Activated CD4-positive, alpha-beta T cell treated with anti-CD3 and anti-CD28 coated beads for 36 hours (primary cell): ENCODE measurements at regions of chr16 and their contacts with region 1.

Region 1: DNA sequence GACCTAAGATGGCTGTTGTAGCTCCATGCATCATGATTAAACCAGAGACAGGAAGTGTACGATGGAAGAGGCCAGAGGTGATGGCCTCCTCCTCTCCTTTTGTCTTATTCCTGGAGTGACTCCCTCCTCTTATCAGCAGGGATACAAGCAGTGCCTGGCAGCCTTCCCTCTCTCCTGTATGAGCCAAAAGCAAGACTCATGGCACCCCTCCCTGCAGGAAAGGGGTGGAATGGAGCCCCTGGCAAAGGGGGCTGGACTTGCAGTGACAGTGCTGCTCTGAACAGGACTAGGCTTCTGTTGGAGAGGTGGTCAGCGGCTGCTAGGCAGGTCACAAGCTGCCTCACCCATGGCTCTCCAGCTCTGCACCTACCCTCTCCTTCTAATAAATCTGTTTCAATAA is 8.4 kb downstream of the TXNL4B start:
- DNase-seq: no peak
- ATAC-seq: no peak
- H3K4me3 Mint-ChIP-seq: no peak overlapping the region
- H3K27ac Mint-ChIP-seq: no peak overlapping the region
- H3K4me1 Mint-ChIP-seq: no peaks in the 10 kb centered on the region
- H3K27me3 Mint-ChIP-seq: no peaks in the 10 kb centered on the region

Region 2: GRCh38 chr16:71867939-71868338 is 217.1 kb before region 1 on chr16:
- CTCF ChIA-PET with region 1: no interaction called
- POLR2A ChIA-PET with region 1: no interaction called
- intact Hi-C with region 1: no loop called
- DNase-seq: no peak
- ATAC-seq: no peak
- H3K4me3 Mint-ChIP-seq: no peak overlapping the region
- H3K27ac Mint-ChIP-seq: no peak overlapping the region
- H3K4me1 Mint-ChIP-seq: peaks cover 37% of the 10 kb centered on the region
- H3K27me3 Mint-ChIP-seq: no peaks in the 10 kb centered on the region

Region 3: DNA sequence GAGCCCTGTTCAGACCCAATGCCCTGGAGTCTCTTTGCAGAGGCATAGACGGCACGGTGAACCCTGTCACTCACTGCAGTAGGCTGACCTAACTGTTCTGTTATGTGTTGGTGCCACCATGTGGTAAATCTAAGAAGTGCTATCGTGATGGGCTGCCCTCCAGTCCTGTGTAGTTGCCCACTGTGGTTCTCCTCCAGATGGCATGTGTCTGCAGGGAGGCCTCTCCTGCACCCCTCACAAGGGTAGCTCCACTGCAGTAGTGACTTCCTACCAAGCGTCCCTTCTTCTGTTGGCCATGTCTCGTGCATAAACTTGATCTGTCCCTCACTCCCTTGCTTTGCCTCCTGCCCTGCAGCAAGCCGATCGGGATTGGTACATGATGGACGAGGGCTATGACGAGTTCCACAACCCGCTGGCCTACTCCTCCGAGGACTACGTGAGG is 14.4 kb after region 1 on chr16:
- CTCF ChIA-PET with region 1: interaction called, 4 read pairs
- POLR2A ChIA-PET with region 1: no interaction called
- intact Hi-C with region 1: loop called in 1 of 2 experiments (anchors 1 kb)
- DNase-seq: peak; percentile 64
- ATAC-seq: peak; percentile 96
- H3K4me3 Mint-ChIP-seq: no peak overlapping the region
- H3K27ac Mint-ChIP-seq: no peak overlapping the region
- H3K4me1 Mint-ChIP-seq: peaks cover 20% of the 10 kb centered on the region
- H3K27me3 Mint-ChIP-seq: no peaks in the 10 kb centered on the region